Activated B cell treated with CpG ODN at 0.5 μM for 24 hours (primary cell): ENCODE measurements at regions of chr6 and their contacts with region 1.

Region 1: DNA sequence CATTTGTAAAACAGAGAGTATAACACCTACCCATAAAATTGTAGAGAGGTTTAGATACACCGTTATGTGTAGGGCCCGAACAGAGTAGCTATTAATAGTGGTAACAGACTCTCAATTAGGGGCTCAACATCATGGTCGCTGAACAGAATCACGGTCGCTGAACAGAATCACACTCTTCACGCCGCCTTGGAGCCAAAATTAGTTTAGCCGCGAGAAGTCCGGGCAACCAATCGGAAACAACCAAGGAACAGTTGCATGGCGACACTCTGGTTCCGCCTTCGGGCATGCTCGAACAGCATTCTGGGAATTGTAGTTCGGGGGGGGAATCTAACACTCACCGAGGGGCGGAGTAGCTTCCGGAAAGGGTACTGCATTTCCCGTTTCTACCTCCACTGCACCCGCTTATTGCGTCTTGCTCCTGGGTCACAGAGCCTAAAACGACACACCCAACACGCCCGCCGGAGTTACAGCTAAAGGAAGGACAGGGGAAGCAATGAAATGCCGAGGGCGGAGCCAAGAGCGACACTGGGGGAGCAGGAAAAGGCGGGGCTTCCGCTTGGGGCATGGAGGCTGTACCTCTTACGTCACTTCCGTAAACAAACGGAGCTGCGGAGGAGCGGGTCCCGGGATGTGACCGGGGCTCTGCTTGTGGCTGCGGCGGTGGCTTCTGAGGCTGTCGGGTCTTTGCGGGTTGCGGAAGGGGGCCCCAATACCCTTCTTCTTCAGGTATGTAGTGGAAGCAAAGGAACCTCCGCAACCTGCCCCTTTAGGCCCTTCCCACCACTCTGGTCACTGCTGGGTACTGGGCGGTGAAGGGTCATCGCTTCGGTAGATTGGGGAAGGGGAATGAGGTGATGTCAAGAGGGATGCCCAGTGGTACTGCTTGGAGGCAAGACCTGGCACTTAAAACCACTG is at the start of gene CCDC28A:
- DNase-seq: peak; percentile 90
- ATAC-seq: peak; percentile 85
- H3K4me3 Mint-ChIP-seq: peak within 1 kb of the TSS; percentile 100
- H3K27ac Mint-ChIP-seq: peak within 1 kb of the TSS; percentile 100
- H3K4me1 Mint-ChIP-seq: peaks cover 28% of the 10 kb centered on the region
- H3K27me3 Mint-ChIP-seq: no peaks in the 10 kb centered on the region
- CTCF ChIP-seq: no peak
- total RNA-seq, gene CCDC28A: 14.0 and 14.6 TPM in 2 replicates

Region 2: GRCh38 chr6:138161338-138162110 is 611.9 kb before region 1 on chr6 and contains the start of gene ARFGEF3:
- CTCF ChIA-PET with region 1: no interaction called
- POLR2A ChIA-PET with region 1: no interaction called
- intact Hi-C with region 1: loop called (anchors 5 kb)
- DNase-seq: peak; percentile 41
- ATAC-seq: peak; percentile 94
- H3K4me3 Mint-ChIP-seq: peak within 1 kb of the TSS; percentile 74
- H3K27ac Mint-ChIP-seq: no peak within 1 kb of the TSS
- H3K4me1 Mint-ChIP-seq: peaks cover 15% of the 10 kb centered on the region
- H3K27me3 Mint-ChIP-seq: peaks cover 43% of the 10 kb centered on the region
- CTCF ChIP-seq: no peak
- total RNA-seq, gene ARFGEF3: 0.02 TPM in 2 replicates